Activated CD4-positive, alpha-beta T cell treated with anti-CD3 and anti-CD28 coated beads for 36 hours (primary cell): ENCODE measurements at regions of chr4 and their contacts with region 1.

Region 1: GRCh38 chr4:80153874-80154544 is 43.3 kb upstream of the PRDM8 start:
- DNase-seq: no peak
- ATAC-seq: peak; percentile 89
- H3K4me3 Mint-ChIP-seq: no peak overlapping the region
- H3K27ac Mint-ChIP-seq: peak overlapping the region; percentile 67
- H3K4me1 Mint-ChIP-seq: peaks cover 28% of the 10 kb centered on the region
- H3K27me3 Mint-ChIP-seq: no peaks in the 10 kb centered on the region

Region 2: DNA sequence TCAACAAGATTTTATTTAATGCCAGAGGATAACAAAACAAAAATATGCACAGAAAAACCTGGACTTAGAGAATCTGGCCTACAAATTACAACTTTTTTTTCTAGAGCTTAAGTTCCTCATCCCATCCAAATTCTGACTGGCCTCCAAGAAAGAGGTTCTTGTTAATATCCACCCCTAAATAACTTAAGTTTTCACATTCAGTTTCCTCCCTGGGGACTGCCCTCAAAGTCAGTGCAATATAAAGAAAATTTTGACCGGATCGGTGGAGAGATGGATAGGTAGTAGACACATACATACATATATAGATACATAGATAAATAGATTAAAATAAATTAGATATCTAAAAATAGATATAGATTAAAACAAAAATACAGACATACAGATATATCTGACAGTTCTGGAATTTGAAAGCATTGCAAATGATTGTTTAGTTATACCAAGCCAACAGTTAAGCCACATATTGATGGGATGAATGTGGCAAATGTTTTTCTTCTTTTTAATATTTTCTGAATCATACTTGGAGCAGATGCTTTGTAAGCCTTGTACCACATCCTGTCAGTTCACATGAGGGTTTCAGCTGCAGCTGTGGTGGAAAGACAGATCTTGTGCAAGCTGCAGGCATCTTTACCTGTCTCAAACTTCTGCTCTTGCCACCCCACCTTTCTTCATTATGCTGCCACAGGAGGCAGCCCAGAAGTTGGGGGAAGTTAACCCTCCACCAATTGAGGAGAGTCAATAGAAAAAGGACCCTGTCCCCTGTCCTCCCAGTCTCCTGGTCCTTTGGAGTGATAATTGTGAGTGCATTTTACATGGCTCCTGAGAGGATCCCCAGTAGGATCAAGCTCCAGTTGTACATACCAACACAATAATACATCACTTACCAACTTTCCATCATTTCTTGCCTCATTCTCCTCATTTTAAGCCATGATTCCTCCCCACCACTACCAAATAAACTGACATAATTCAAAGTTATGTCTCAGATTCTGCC is 15.2 kb before region 1 on chr4:
- CTCF ChIA-PET with region 1: interaction called, 3 read pairs
- POLR2A ChIA-PET with region 1: no interaction called
- intact Hi-C with region 1: loop called in 1 of 2 experiments (anchors 2 kb)
- DNase-seq: peak; percentile 74
- ATAC-seq: peak; percentile 95
- H3K4me3 Mint-ChIP-seq: no peak overlapping the region
- H3K27ac Mint-ChIP-seq: peak overlapping the region; percentile 71
- H3K4me1 Mint-ChIP-seq: peaks cover 58% of the 10 kb centered on the region
- H3K27me3 Mint-ChIP-seq: no peaks in the 10 kb centered on the region

Region 3: GRCh38 chr4:81594490-81595159 is 1440.6 kb after region 1 on chr4:
- CTCF ChIA-PET with region 1: no interaction called
- POLR2A ChIA-PET with region 1: no interaction called
- intact Hi-C with region 1: no loop called
- DNase-seq: no peak
- ATAC-seq: no peak
- H3K4me3 Mint-ChIP-seq: no peak overlapping the region
- H3K27ac Mint-ChIP-seq: no peak overlapping the region
- H3K4me1 Mint-ChIP-seq: peaks cover 11% of the 10 kb centered on the region
- H3K27me3 Mint-ChIP-seq: peaks cover 2% of the 10 kb centered on the region